Heart right ventricle (tissue), 16 donors: ENCODE measurements at regions of chr2 and their contacts with region 1.

Region 1: DNA sequence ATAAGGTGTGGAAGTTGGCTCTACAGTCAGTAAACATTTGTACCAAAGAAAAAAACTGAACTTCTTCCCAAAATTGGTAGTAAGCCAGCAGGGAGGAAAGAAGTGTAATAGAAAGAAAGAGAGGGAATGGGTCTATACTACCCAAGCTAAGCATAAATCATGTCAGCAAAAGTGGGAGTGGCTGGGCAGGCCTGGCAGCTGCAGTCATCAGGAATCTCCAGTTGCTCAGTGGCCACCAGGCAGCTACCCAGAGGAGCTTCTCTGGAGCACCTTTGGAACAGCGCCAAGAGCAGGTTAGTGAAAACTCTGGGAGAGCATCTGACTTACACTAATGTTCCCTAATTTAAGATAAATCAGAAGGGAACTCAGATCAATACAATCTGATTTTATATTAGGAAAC is 14.4 kb downstream of the FRZB start:
- DNase-seq: no peak
- ATAC-seq: no peak
- H3K4me3 ChIP-seq: no peak overlapping the region
- H3K27ac ChIP-seq: peak overlapping the region in 2 of 10 donors; percentile 27 to 44
- H3K4me1 ChIP-seq: peaks cover 0 to 9% (median 0%) of the 10 kb centered on the region in 9 donors
- H3K27me3 ChIP-seq: no peaks in the 10 kb centered on the region
- CTCF ChIP-seq: no peak

Region 2: GRCh38 chr2:182949572-182950189 is 97.6 kb after region 1 on chr2:
- intact Hi-C with region 1: loop called in 1 of 10 experiments (anchors 10 kb)
- DNase-seq: peak; percentile 19 to 24
- ATAC-seq: peak in 7 of 8 donors; percentile 53 to 91 (median 84)
- H3K4me3 ChIP-seq: no peak overlapping the region
- H3K27ac ChIP-seq: peak overlapping the region in 8 of 10 donors; percentile 9 to 60 (median 34)
- H3K4me1 ChIP-seq: peaks cover 0 to 27% (median 11%) of the 10 kb centered on the region in 9 donors
- H3K27me3 ChIP-seq: no peaks in the 10 kb centered on the region
- CTCF ChIP-seq: no peak